ENCODE measurements at regions of chr5 and their contacts with region 1.

Region 1: DNA sequence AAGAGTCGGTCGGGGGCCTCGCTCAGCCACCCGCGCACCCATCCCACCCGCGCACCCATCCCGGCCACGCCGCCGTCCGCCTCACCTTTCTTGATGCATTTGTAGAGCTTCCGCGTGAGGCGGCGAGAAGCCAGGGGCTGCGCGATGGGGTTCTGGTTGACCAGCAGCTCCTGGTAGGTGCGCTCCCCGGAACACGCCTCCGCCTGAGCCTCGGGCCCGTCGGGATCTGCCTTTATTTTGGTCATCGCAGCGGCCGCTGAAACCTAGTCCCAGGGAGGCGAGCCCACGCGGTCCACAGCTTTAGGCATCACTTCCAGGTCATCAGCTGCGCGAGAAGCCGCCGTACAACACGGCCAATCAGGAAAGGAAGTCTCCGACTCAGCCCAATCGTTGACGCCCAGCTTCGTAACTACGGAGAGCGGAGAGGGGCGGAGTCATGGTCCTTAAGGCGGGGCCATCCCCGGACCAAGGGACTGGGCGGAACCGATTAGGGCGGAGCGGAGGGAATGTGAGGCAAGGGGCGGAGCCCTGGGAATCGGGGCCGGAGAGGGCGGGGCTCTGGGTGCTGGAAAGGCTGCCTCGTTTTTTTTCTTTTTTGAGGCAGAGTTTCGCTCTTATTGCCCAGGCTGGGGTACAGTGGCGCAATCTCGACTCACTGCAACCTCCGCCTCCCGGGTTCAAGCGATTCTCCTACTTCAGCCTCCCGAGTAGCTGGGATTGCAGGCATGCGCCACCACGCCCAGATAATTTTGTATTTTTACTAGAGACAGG is at the start of gene NHP2:
- DNase-seq: peak; percentile 95
- ATAC-seq: peak; percentile 99
- H3K4me3 Mint-ChIP-seq: peak within 1 kb of the TSS; percentile 96
- H3K27ac Mint-ChIP-seq: peak within 1 kb of the TSS; percentile 83
- H3K4me1 Mint-ChIP-seq: peaks cover 37% of the 10 kb centered on the region
- H3K27me3 Mint-ChIP-seq: no peaks in the 10 kb centered on the region
- CTCF ChIP-seq: no peak
- total RNA-seq, gene NHP2: 175 and 180 TPM in 2 replicates

Region 2: GRCh38 chr5:177311723-177312648 is 841.8 kb before region 1 on chr5 and contains the start of gene MXD3:
- CTCF ChIA-PET with region 1: no interaction called
- POLR2A ChIA-PET with region 1: no interaction called
- intact Hi-C with region 1: loop called (anchors 5 kb)
- DNase-seq: peak; percentile 89
- ATAC-seq: peak; percentile 90
- H3K4me3 Mint-ChIP-seq: peak within 1 kb of the TSS; percentile 80
- H3K27ac Mint-ChIP-seq: peak within 1 kb of the TSS; percentile 47
- H3K4me1 Mint-ChIP-seq: peaks cover 38% of the 10 kb centered on the region
- H3K27me3 Mint-ChIP-seq: no peaks in the 10 kb centered on the region
- CTCF ChIP-seq: no peak
- total RNA-seq, gene MXD3: 7.6 and 9.1 TPM in 2 replicates

Region 3: GRCh38 chr5:178075840-178076548 is 77.8 kb before region 1 on chr5:
- CTCF ChIA-PET with region 1: interaction called, 190 read pairs
- POLR2A ChIA-PET with region 1: interaction called, 3 read pairs
- intact Hi-C with region 1: no loop called
- DNase-seq: peak; percentile 71
- ATAC-seq: peak; percentile 94
- H3K4me3 Mint-ChIP-seq: peak overlapping the region; percentile 12
- H3K27ac Mint-ChIP-seq: no peak overlapping the region
- H3K4me1 Mint-ChIP-seq: peaks cover 6% of the 10 kb centered on the region
- H3K27me3 Mint-ChIP-seq: peaks cover 9% of the 10 kb centered on the region
- CTCF ChIP-seq: peak; percentile 95

Region 4: GRCh38 chr5:178120868-178121357 is 32.8 kb before region 1 on chr5:
- CTCF ChIA-PET with region 1: interaction called, 6 read pairs
- POLR2A ChIA-PET with region 1: interaction called, 12 read pairs
- intact Hi-C with region 1: no loop called
- DNase-seq: peak; percentile 56
- ATAC-seq: peak; percentile 67
- H3K4me3 Mint-ChIP-seq: peak overlapping the region; percentile 55
- H3K27ac Mint-ChIP-seq: peak overlapping the region; percentile 65
- H3K4me1 Mint-ChIP-seq: peaks cover 66% of the 10 kb centered on the region
- H3K27me3 Mint-ChIP-seq: no peaks in the 10 kb centered on the region
- CTCF ChIP-seq: peak; percentile 25

Region 5: GRCh38 chr5:178180141-178180863 is 26.5 kb after region 1 on chr5:
- CTCF ChIA-PET with region 1: no interaction called
- POLR2A ChIA-PET with region 1: no interaction called
- intact Hi-C with region 1: no loop called
- DNase-seq: no peak
- ATAC-seq: no peak
- H3K4me3 Mint-ChIP-seq: no peak overlapping the region
- H3K27ac Mint-ChIP-seq: no peak overlapping the region
- H3K4me1 Mint-ChIP-seq: no peaks in the 10 kb centered on the region
- H3K27me3 Mint-ChIP-seq: peaks cover 14% of the 10 kb centered on the region
- CTCF ChIP-seq: no peak

Region 6: GRCh38 chr5:178204182-178204894 is 50.6 kb after region 1 on chr5 and contains the start of gene HNRNPAB:
- CTCF ChIA-PET with region 1: no interaction called
- POLR2A ChIA-PET with region 1: interaction called, 21 read pairs
- intact Hi-C with region 1: loop called (anchors 1 kb)
- DNase-seq: peak; percentile 95
- ATAC-seq: peak; percentile 80
- H3K4me3 Mint-ChIP-seq: peak within 1 kb of the TSS; percentile 95
- H3K27ac Mint-ChIP-seq: peak within 1 kb of the TSS; percentile 95
- H3K4me1 Mint-ChIP-seq: peaks cover 28% of the 10 kb centered on the region
- H3K27me3 Mint-ChIP-seq: no peaks in the 10 kb centered on the region
- CTCF ChIP-seq: no peak
- total RNA-seq, gene HNRNPAB: 118 and 120 TPM in 2 replicates

Measured in activated B cell treated with CpG ODN at 0.5 μM for 24 hours (primary cell).